ENCODE measurements at regions of chr19 and their contacts with region 1.

Region 1: GRCh38 chr19:3100081-3100864 is 6.1 kb downstream of the GNA11 start:
- DNase-seq: no peak
- ATAC-seq: no peak

Region 2: GRCh38 chr19:2962045-2962561 is 138.2 kb before region 1 on chr19:
- intact Hi-C with region 1: loop called (anchors 5 kb)
- DNase-seq: no peak
- ATAC-seq: peak; percentile 90

Region 3: DNA sequence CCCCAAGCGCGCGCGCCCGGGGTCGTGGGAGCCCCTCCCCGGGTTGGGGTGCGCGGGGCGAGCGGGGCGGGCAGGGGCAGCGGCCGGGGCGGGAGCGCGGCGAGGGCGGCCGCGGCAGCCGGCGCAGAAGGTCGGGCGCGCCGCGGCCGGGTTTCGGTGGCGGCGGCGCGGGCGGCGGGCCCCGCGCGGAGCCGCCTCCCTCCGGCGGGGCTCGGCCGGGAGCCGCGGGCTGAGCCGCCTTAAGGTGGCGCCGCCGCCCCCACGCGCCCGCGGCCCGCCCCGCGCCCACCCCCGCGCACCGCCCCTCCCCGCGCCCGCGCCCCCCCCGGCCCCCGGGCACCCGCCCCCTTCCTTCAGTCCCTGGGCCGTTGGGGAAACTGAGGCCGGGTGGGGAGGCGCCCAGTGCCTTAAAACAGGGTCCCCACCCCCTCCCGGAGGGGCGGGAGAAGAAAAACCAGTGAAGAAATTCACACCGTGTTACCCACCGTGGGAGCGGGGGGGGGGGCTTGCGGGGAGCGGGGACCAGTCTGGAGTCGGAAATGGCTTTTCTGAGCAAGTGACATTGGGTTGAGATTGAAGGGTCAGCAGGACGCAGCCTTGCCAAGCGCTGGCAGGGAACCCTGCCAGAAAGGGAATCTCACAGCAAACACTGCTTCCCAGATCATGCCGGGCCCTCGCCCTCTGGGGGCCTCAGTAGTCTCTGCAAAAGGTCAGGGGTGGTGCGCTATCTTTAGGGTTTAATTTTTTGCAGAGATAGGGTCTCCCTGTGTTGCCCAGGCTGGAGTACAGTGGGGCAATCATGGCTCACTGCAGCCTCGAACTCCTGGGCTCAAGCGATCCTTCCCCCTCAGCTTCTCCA is 71.0 kb before region 1 on chr19 and contains the start of gene TLE2:
- intact Hi-C with region 1: no loop called
- DNase-seq: peak; percentile 71
- ATAC-seq: peak; percentile 49
- total RNA-seq, gene TLE2: 58.6 TPM

Measured in Right ventricle myocardium inferior (tissue), 1 donor.